AG04449 (cell line): ENCODE measurements at regions of chr1 and their contacts with region 1.

Region 1: DNA sequence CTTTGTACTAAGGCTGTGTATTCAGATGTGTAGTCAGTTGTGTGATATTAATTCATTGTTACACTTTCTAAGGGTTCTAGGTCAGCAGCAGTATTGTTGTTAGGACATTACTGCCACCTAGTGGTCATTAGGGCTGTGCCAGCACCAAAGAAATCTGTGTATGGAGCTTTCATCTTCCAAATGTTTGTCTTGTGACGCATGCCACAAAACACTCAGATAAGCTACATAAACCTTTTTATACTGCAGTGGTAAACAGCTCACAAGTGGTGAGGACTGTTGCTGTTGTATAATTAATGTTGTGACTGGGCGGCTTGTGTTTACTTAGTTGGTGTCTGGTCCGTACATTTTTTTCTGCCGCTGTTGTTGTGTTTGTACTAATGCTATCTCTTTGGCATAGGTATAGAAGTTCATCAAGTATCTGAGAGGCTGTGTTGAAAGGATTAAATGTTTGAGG is 51.7 kb downstream of the S1PR1 start:
- DNase-seq: peak; percentile 57
- H3K4me3 ChIP-seq: no peak overlapping the region; the same call in 1 of the 2 replicates
- CTCF ChIP-seq: peak; percentile 71

Region 2: DNA sequence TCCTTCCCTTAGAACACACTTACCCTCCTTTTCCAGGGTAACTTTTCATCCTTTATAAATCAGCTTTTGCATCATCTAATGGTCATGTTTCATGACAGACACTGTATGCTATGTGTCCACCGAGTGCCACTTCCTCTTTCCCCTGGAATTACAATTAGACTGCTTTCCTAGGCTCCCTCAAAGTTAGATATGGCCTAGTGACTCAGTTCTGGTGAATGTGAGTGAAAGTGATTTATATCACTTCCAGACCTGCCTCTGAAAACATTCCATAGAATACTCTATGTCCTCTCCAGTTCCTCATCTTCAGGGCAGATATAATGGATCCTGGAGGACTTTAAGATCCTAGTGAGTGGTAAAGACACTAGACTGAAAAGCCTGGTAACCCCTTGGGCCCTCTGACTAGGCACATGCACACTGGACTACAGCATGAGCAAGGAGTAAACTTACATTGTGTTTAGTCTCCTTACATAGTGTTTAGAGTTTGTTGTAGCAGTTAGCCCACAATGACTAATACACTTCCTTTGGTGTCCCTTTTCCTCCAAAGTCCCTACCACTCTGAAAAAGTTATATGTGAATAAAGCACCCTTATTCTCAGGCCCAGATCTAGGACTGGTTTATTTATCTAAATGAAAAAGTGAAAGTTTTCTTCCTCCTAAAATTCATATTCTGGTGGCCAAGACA is 691.3 kb before region 1 on chr1:
- CTCF ChIA-PET with region 1: no interaction called
- POLR2A ChIA-PET with region 1: no interaction called
- DNase-seq: peak; percentile 66
- H3K4me3 ChIP-seq: no peak overlapping the region
- CTCF ChIP-seq: no peak

Region 3: DNA sequence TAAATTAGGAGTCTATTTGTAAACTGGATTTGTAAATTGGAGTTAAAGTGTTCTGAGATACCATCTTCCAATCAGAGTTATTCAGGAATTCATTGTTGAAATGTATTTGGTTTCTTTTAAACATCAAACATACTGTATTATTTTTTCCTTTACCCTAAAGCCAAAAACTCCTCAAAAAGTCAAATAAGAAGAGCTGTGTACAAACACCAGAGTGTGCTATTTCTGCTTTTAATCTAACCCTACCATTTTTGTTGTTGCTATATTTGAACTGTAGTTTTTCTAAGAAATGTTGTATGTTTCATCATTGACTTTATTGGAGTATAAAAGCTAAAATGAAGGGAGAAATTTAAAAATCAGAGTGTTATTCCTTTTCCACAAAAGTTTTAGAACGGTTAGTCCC is 356.8 kb before region 1 on chr1:
- CTCF ChIA-PET with region 1: interaction called, 15 read pairs
- POLR2A ChIA-PET with region 1: no interaction called
- DNase-seq: no peak
- H3K4me3 ChIP-seq: no peak overlapping the region
- CTCF ChIP-seq: no peak

Region 4: DNA sequence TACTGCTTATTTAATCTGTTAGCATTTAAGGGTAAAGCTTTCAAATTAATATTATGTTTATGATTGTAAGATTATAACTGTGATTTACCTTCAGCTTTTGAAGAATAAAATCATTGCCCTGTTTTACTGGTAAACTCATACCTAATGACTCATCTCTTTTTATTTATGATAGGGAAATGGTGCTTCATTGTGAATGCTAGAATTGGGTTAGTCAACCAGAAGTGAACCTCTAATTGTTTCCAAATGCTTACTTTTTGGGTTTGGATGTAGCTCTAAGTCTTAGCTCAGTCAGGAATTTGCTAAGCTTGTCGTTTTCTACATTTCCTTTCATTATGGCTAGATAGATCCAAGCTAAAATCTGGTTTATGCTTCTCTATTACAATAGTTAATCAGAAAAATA is 333.2 kb before region 1 on chr1:
- CTCF ChIA-PET with region 1: interaction called, 12 read pairs
- POLR2A ChIA-PET with region 1: no interaction called
- DNase-seq: peak; percentile 67
- H3K4me3 ChIP-seq: no peak overlapping the region
- CTCF ChIP-seq: no peak

Region 5: GRCh38 chr1:101025657-101026504 is 262.6 kb before region 1 on chr1 and contains the start of gene DPH5:
- CTCF ChIA-PET with region 1: interaction called, 14 read pairs
- POLR2A ChIA-PET with region 1: no interaction called
- DNase-seq: peak; percentile 59
- H3K4me3 ChIP-seq: peak within 1 kb of the TSS; percentile 79
- CTCF ChIP-seq: no peak

Region 6: DNA sequence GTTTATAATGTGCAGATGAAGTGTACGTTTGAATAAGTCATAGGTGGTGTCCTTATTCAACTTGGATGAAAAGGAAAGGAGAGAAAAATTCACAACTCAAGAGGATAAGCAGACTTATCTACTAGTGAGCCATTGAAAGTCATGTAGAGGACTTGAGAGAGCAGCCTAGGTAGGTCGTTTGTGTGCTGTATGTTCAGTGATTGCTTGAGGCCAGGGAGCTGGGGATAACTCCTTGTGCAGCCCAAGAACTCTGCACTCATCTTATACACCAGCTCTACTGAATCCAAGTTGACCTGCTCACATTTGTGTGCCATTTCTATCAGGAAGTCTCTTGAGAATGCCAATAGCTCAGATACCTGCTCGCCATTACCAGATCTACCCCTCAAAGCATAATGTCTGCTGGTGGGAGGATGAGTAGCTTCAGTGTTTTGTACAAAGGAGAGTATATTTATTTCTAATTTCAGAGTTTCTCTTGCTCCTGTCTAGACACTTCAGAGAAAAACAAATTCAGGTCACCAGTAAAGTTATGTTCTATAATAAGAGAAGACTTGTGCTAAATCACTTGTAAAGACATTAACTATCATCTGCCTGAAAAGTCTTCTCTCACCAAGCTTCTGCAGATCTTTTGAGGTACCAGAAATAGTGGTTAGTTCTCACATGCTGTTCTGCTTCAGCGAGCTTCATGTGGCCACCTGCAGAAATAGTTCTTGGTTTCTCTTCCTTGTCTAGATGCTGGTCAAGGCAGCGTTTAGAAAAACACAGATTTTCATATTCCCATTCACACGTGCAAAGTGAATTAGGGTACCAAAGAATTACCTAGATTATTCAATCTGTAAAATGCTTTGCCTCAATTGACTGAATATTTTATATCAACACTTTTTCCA is 40.9 kb before region 1 on chr1:
- CTCF ChIA-PET with region 1: interaction called, 10 read pairs
- POLR2A ChIA-PET with region 1: no interaction called
- DNase-seq: no peak
- H3K4me3 ChIP-seq: no peak overlapping the region
- CTCF ChIP-seq: no peak

Region 7: GRCh38 chr1:101302831-101303511 is 14.5 kb after region 1 on chr1:
- CTCF ChIA-PET with region 1: interaction called, 16 read pairs
- POLR2A ChIA-PET with region 1: no interaction called
- DNase-seq: no peak
- H3K4me3 ChIP-seq: no peak overlapping the region
- CTCF ChIP-seq: no peak